AG04450 (cell line): ENCODE measurements at regions of chr6 and their contacts with region 1.

Region 1: GRCh38 chr6:154928325-154928922 is 66.7 kb upstream of the TIAM2 start:
- DNase-seq: peak; percentile 50
- H3K4me3 ChIP-seq: no peak overlapping the region
- H3K27ac ChIP-seq: no peak overlapping the region
- H3K27me3 ChIP-seq: no peaks in the 10 kb centered on the region
- CTCF ChIP-seq: peak; percentile 88

Region 2: DNA sequence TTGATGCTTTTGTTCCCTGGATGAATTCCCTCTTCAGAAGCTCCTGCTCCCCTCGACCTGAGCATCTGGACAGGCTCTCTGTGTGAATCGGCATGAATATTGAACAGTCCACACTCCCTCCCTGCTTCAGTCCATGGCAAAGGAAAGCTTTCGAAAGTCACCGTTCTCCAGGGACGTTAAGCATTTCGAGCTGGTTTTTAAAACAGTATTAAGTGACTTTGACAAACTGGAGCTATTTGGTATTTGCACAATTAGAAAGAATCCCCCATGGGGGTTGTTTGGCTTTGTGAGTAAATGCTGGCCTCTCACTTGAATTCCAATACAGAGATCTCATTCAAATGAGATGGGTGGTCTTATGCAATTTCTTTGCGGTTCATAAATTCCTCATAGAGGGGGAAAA is 18.6 kb before region 1 on chr6:
- CTCF ChIA-PET with region 1: interaction called, 12 read pairs
- POLR2A ChIA-PET with region 1: no interaction called
- DNase-seq: no peak
- H3K4me3 ChIP-seq: no peak overlapping the region
- H3K27ac ChIP-seq: no peak overlapping the region
- H3K27me3 ChIP-seq: no peaks in the 10 kb centered on the region
- CTCF ChIP-seq: no peak

Region 3: DNA sequence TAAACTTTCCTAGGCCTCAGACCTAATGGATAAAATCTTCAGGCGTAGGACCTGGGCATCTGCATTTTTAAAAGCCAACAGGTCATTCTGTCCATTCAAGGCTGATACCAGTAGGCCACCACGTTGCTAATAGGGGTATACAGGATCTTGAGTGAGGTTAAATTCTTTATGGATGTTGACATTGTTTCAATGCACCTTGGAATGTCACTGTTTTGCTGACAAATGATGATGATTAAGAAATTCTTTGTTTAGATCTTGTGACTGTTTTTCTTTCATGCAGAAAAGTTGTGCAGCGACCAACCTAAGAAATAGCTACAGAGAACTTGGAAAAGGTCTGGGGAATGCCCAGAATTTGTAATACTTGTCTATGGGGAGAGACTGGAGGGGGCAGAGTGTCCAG is 234.2 kb after region 1 on chr6:
- CTCF ChIA-PET with region 1: interaction called, 163 read pairs
- POLR2A ChIA-PET with region 1: no interaction called
- DNase-seq: no peak
- H3K4me3 ChIP-seq: no peak overlapping the region
- H3K27ac ChIP-seq: peak overlapping the region; percentile 13
- H3K27me3 ChIP-seq: no peaks in the 10 kb centered on the region
- CTCF ChIP-seq: no peak

Region 4: GRCh38 chr6:155174576-155175211 is 246.3 kb after region 1 on chr6:
- CTCF ChIA-PET with region 1: interaction called, 163 read pairs
- POLR2A ChIA-PET with region 1: interaction called, 4 read pairs
- DNase-seq: peak; percentile 55
- H3K4me3 ChIP-seq: no peak overlapping the region
- H3K27ac ChIP-seq: no peak overlapping the region
- H3K27me3 ChIP-seq: no peaks in the 10 kb centered on the region
- CTCF ChIP-seq: peak; percentile 81

Region 5: DNA sequence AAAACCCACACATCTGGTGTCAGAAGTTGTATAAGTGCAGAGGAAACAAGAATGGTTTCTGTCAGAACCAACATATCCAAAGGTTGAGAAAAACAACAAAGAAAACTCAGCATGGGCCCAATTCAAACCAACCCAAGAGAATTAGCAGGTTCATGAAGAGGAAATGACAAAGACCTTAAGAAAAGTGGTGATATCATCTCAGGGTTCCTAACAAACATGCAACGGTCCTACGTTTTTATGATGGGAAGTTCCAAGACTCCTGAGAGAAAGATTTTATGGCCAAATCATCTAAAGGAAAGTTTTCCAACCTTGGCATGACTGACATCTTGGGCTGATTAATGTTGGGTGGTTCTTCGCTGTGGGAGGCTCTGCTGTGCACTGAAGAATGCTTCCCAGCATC is 362.9 kb after region 1 on chr6:
- CTCF ChIA-PET with region 1: no interaction called
- POLR2A ChIA-PET with region 1: no interaction called
- DNase-seq: no peak
- H3K4me3 ChIP-seq: no peak overlapping the region
- H3K27ac ChIP-seq: no peak overlapping the region
- H3K27me3 ChIP-seq: no peaks in the 10 kb centered on the region
- CTCF ChIP-seq: no peak